Transverse colon (tissue), 4 donors: ENCODE measurements at regions of chr6 and their contacts with region 1.

Region 1: GRCh38 chr6:163956571-163957407 is 542.3 kb downstream of the QKI start:
- DNase-seq: peak; percentile 74
- H3K4me3 ChIP-seq: no peak overlapping the region
- H3K27ac ChIP-seq: no peak overlapping the region
- H3K4me1 ChIP-seq: peaks cover 0 to 4% (median 0%) of the 10 kb centered on the region in 4 donors
- H3K27me3 ChIP-seq: no peaks in the 10 kb centered on the region
- CTCF ChIP-seq: peak; percentile 78 to 83 (median 80)
- EP300 ChIP-seq: no peak
- POLR2A ChIP-seq: no peak

Region 2: DNA sequence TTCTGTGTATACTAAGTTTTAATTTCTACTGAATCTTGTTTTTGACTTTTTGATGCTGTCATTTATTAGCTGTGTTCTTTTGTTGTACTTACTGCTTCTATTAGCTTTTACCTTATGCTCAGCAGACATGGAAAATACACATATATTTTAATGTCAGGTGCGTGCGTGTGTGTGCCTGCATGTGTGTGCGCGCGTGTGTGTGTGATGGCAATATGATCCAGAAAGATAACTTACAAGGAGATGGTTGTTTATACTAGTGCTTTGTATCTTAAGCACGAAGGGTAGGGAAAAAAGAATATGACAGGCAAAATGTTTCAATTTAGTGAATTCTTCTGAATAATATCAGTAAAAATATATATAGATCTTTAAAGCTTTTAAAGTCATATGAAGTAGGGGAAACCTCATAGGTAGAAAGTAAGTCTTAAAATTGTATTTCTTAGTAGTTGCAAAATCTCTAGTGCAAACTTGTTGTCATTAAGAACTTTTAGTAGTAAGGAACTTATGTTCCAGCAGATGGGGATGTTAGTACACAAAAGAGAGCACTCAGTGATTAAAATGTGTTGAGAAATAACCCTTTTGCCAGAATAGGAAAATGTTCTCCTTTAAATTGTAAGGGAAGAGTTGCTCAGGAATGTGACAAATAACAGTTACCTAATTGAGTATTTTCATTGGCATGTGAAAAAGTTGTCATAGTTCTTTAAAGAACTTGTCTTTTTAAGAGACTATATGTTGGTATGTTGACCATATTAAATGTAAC is 529.1 kb before region 1 on chr6:
- in situ Hi-C with region 1: loop called (anchors 5 to 25 kb)
- intact Hi-C with region 1: no loop called
- DNase-seq: no peak
- H3K4me3 ChIP-seq: no peak overlapping the region
- H3K27ac ChIP-seq: no peak overlapping the region
- H3K4me1 ChIP-seq: peaks cover 9 to 59% (median 23%) of the 10 kb centered on the region in 4 donors
- H3K27me3 ChIP-seq: peaks cover 66% of the 10 kb centered on the region
- CTCF ChIP-seq: peak; percentile 20 to 34 (median 27)
- EP300 ChIP-seq: no peak
- POLR2A ChIP-seq: no peak

Region 3: GRCh38 chr6:163438940-163439335 is 517.9 kb before region 1 on chr6:
- in situ Hi-C with region 1: loop called in 2 of 4 experiments (anchors 10 to 25 kb)
- intact Hi-C with region 1: no loop called
- DNase-seq: peak; percentile 53
- H3K4me3 ChIP-seq: no peak overlapping the region
- H3K27ac ChIP-seq: no peak overlapping the region
- H3K4me1 ChIP-seq: peaks cover 0 to 56% (median 9%) of the 10 kb centered on the region in 4 donors
- H3K27me3 ChIP-seq: peaks cover 15% of the 10 kb centered on the region
- CTCF ChIP-seq: no peak
- EP300 ChIP-seq: no peak
- POLR2A ChIP-seq: no peak